Ovary (tissue), 10 donors: ENCODE measurements at regions of chr6 and their contacts with region 1.

Region 1: DNA sequence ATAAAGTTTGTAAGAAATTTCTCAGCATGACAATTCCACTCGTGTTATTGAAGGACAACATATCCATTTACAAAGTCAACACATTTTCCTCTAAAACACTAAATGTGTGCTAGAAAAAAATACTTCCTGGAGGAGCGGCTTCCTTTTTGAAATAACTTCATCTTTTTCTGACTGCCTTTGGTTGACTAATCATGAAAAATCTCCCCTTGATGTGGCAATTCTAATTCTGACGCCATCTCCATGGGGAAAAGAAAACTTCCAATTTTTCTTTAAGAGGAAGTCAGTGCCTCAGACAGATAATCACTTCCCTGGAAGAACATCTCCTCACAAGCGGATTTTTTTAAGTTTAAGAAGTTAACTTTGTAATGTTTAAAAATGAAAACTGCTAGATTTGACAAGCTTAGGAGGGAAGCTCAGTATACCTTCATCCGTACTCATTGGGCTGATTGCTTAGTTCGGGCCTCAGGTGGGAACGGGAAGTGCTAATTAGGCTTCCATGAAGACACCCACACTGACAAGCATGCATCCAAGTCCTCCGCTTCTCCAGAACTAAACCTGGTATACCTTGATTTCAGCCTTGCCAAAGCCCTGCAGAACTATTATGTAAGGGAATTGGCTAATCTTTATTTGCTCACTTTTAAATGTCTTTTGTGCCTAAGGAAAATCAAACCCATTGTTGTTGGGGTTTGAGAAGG is 35.1 kb upstream of the DUSP22 start:
- DNase-seq: no peak
- H3K4me3 ChIP-seq: no peak overlapping the region
- H3K27ac ChIP-seq: no peak overlapping the region
- H3K4me1 ChIP-seq: no peaks in the 10 kb centered on the region
- H3K27me3 ChIP-seq: no peaks in the 10 kb centered on the region
- CTCF ChIP-seq: no peak
- EP300 ChIP-seq: no peak
- POLR2A ChIP-seq: no peak

Region 2: GRCh38 chr6:219641-220198 is 37.5 kb before region 1 on chr6:
- intact Hi-C with region 1: loop called in 1 of 4 experiments (anchors 2 kb)
- DNase-seq: peak in 1 of 5 donors; percentile 21
- H3K4me3 ChIP-seq: no peak overlapping the region
- H3K27ac ChIP-seq: no peak overlapping the region
- H3K4me1 ChIP-seq: no peaks in the 10 kb centered on the region
- H3K27me3 ChIP-seq: no peaks in the 10 kb centered on the region
- CTCF ChIP-seq: no peak
- EP300 ChIP-seq: no peak
- POLR2A ChIP-seq: no peak

Region 3: GRCh38 chr6:291697-292505 is 34.7 kb after region 1 on chr6 and contains the start of gene DUSP22:
- intact Hi-C with region 1: no loop called
- DNase-seq: peak; percentile 83 to 90 (median 87)
- H3K4me3 ChIP-seq: peak within 1 kb of the TSS; percentile 64
- H3K27ac ChIP-seq: peak within 1 kb of the TSS; percentile 91 to 92
- H3K4me1 ChIP-seq: no peaks in the 10 kb centered on the region
- H3K27me3 ChIP-seq: no peaks in the 10 kb centered on the region
- CTCF ChIP-seq: peak in 1 of 3 donors; percentile 17
- EP300 ChIP-seq: no peak
- POLR2A ChIP-seq: peak; percentile 67
- total RNA-seq, gene DUSP22: 25.3 to 35.0 (median 29.3) TPM

Region 4: DNA sequence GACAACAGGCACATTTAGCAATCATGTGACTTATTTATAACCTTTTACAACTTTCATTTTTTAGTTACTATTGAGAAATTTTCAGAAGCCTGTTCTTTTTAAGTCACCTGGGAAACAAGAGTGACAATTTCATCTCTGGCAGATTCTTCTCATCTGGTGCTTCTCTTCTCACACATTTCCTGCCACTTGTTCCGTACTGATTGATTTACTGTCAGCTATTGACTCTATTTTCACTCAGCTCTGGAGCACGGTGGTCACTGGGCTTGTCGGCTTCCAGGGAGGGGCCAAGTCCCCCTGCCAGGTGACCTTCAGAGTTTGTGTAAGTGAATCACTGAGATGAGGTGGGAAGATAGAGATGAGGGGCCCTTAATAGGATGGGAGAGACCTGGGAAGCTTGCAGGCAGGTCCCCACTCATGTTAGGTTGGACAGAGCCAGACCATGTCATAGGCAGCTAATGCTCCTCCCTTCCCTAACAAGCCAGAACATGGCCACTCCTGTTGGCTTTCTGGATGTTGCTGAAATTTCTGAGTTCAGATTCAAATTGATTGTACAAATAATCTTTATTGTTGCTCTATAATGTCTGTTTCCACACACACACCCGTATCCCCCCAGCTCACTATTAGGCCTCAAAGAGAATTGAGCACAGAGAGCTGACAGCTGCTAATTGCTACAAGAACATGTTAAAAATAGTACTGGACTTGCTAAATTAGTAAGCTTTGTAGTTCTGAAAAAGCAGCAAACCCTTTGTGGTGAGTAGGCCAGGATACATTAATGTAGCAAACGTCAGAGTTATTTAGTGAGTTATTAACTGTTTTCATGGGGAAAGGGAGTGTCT is 48.4 kb after region 1 on chr6:
- intact Hi-C with region 1: no loop called
- DNase-seq: no peak
- H3K4me3 ChIP-seq: no peak overlapping the region
- H3K27ac ChIP-seq: no peak overlapping the region
- H3K4me1 ChIP-seq: no peaks in the 10 kb centered on the region
- H3K27me3 ChIP-seq: no peaks in the 10 kb centered on the region
- CTCF ChIP-seq: no peak
- EP300 ChIP-seq: no peak
- POLR2A ChIP-seq: no peak